WTC11 (cell line): ENCODE measurements at regions of chr13 and their contacts with region 1.

Region 1: DNA sequence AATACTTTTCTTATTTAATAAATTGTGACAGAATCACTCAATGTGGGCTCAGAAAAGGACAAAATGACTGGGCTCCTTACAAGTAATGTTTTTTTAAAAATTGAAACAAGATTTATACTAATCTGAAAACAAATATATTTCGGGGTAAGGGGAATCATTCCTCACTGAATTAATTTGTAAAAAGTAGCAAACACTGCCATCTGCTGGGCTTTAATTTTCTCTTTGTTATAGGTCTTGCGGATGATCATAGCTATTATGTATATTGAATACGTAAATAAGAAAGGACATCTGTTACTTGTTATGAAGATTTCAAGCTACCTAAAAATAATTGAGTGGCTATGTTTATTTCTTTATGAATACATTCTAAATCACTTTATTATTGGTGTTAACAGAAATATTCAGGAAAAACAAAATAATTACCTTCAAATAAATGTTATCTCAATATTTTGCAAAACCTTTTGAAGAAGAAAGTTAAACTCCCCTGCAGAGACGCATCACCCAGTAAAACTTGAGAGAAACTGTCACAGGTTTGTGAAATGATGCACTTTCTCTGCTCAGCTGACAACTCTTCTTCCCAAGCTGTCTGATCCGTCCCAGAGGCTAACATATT is 17.8 kb upstream of the ENOX1 start:
- DNase-seq: no peak
- ATAC-seq: no peak
- H3K4me3 Mint-ChIP-seq: 0 out of 2 replicates have a peak overlapping the region, but pooled peaks have one; percentile 27
- H3K27ac Mint-ChIP-seq: peak overlapping the region; percentile 78; the same call in 1 of the 2 replicates
- H3K4me1 Mint-ChIP-seq: peaks cover 25% of the 10 kb centered on the region
- H3K27me3 Mint-ChIP-seq: no peaks in the 10 kb centered on the region
- CTCF ChIP-seq: no peak; the same call in 1 of the 2 replicates

Region 2: GRCh38 chr13:43303033-43303729 is 501.4 kb before region 1 on chr13:
- CTCF ChIA-PET with region 1: interaction called, 12 read pairs
- POLR2A ChIA-PET with region 1: no interaction called
- DNase-seq: peak; percentile 66
- ATAC-seq: peak; percentile 91
- H3K4me3 Mint-ChIP-seq: no peak overlapping the region
- H3K27ac Mint-ChIP-seq: no peak overlapping the region
- H3K4me1 Mint-ChIP-seq: peaks cover 39% of the 10 kb centered on the region
- H3K27me3 Mint-ChIP-seq: 0 out of 2 replicates have a peak, but pooled peaks cover 4% of the 10 kb centered on the region
- CTCF ChIP-seq: peak; percentile 13; the same call in 1 of the 2 replicates

Region 3: DNA sequence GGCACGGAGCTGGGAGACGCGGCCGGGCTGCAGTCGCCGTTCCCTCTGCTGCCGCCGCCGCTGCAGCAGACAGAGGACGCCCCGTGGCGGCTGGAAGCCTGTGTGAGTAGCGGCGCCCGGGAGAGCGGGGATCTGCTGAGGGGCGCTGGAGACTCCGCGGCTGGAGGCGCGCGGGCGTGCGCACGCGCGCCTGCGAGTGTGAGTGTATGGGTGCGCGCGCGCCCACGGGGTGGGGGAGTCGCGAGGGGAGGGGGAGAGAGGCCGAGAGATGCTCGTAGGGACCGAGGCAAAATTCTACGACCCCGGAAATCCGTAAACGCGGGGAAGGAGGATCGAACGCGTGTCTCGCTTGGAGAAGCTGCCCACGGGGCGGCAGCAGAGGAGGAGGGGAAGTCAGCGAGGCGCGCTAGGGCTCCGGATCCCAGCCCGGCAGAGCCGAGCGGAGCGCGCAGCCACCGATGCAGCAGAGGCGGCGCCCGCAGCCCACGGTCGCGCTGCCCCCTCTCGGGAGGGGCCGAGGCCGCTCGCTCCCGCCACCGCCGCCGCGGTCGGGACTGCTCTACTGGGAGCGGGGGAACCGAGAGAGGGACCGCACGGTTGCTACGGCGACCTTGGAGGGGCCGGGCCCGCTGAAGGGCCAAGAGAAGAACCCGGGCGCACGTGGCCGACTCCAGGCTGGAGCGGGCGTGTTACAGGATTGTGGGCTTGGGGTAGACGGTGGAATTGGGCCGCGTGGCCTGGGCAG is 17.6 kb before region 1 on chr13 and contains the start of gene ENOX1:
- CTCF ChIA-PET with region 1: interaction called, 17 read pairs
- POLR2A ChIA-PET with region 1: no interaction called
- DNase-seq: peak; percentile 63
- ATAC-seq: peak; percentile 56
- H3K4me3 Mint-ChIP-seq: peak within 1 kb of the TSS; percentile 85
- H3K27ac Mint-ChIP-seq: no peak within 1 kb of the TSS
- H3K4me1 Mint-ChIP-seq: peaks cover 19% of the 10 kb centered on the region
- H3K27me3 Mint-ChIP-seq: peaks cover 70% of the 10 kb centered on the region
- CTCF ChIP-seq: no peak
- total RNA-seq, gene ENOX1: 0.09 to 0.26 TPM (median 0.16 TPM) in 3 replicates

Region 4: DNA sequence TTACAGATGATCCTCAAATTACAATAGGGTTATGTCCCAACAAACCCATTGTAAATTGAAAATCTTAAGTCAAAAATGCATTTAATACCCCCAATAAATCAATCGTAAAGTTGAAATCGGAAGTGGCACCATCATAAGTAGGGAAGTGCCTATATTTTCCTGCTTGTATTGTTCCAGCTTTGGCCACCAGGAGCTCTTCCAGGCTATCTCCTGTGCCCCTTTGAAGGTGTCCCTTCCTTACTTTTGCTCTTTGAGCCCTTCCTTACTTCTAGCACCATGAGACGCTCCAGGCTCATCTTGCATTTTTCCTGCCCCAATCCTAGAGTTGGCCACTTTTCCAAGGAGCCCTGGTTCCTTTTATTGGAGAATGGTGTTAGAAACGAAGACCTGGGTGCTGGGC is 934.6 kb after region 1 on chr13:
- CTCF ChIA-PET with region 1: no interaction called
- POLR2A ChIA-PET with region 1: no interaction called
- DNase-seq: no peak
- ATAC-seq: peak; percentile 82
- H3K4me3 Mint-ChIP-seq: no peak overlapping the region
- H3K27ac Mint-ChIP-seq: no peak overlapping the region
- H3K4me1 Mint-ChIP-seq: peaks cover 14% of the 10 kb centered on the region
- H3K27me3 Mint-ChIP-seq: no peaks in the 10 kb centered on the region
- CTCF ChIP-seq: no peak